ENCODE measurements at regions of chr14 and their contacts with region 1.

Region 1: GRCh38 chr14:77659831-77660230 is 43.4 kb upstream of the SPTLC2 start:
- DNase-seq: no peak
- ATAC-seq: peak; percentile 23

Region 2: DNA sequence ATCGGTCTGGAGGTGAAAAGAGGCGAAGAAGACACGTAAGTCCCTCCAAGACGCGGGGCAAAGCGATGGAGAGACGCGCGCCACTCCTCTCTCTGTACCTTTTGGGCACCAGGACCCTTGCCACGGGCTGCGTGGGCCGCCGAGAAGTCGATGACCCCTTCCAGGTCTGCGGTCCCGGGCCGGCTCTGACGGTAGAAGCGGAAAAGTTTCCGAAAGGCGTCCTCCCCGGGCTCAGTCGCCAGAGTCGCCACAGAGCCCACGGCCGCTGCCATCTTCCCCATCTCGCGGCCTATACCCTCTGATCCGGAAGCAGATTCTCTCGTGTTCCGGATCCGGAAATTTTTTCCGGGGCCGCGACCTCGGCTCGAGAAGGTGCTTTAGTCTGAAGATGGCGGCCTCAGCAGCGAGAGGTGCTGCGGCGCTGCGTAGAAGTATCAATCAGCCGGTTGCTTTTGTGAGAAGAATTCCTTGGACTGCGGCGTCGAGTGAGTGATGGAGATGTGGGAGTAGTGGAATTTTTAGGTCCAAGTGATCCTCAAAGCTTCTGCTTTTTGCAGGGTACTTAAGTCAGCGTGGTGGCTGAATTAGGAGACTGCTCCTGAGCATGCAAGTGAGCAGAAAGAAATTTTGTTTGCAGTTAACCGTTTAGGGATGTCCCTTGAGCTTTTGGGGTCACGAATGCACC is 48.0 kb after region 1 on chr14 and contains the starts of genes ALKBH1 and SLIRP:
- intact Hi-C with region 1: loop called (anchors 5 kb)
- DNase-seq: peak; percentile 92
- ATAC-seq: peak; percentile 99
- total RNA-seq, gene ALKBH1: 12.1 TPM
- total RNA-seq, gene SLIRP: 212 TPM

Measured in Right ventricle myocardium superior (tissue), 1 donor.